ENCODE measurements at regions of chr20 and their contacts with region 1.

Region 1: GRCh38 chr20:38893565-38894090 is 32.6 kb upstream of the FAM83D start:
- DNase-seq: peak; percentile 82
- H3K4me3 Mint-ChIP-seq: no peak overlapping the region
- H3K27ac Mint-ChIP-seq: peak overlapping the region; percentile 73
- H3K4me1 Mint-ChIP-seq: peaks cover 32% of the 10 kb centered on the region
- H3K27me3 Mint-ChIP-seq: no peaks in the 10 kb centered on the region

Region 2: GRCh38 chr20:38751360-38751976 is 142.2 kb before region 1 on chr20:
- CTCF ChIA-PET with region 1: interaction called, 23 read pairs
- DNase-seq: peak; percentile 53
- H3K4me3 Mint-ChIP-seq: no peak overlapping the region
- H3K27ac Mint-ChIP-seq: no peak overlapping the region
- H3K4me1 Mint-ChIP-seq: peaks cover 31% of the 10 kb centered on the region
- H3K27me3 Mint-ChIP-seq: no peaks in the 10 kb centered on the region

Region 3: GRCh38 chr20:38779247-38780097 is 114.2 kb before region 1 on chr20:
- CTCF ChIA-PET with region 1: no interaction called
- DNase-seq: no peak
- H3K4me3 Mint-ChIP-seq: no peak overlapping the region
- H3K27ac Mint-ChIP-seq: no peak overlapping the region
- H3K4me1 Mint-ChIP-seq: peaks cover 9% of the 10 kb centered on the region
- H3K27me3 Mint-ChIP-seq: no peaks in the 10 kb centered on the region

Region 4: DNA sequence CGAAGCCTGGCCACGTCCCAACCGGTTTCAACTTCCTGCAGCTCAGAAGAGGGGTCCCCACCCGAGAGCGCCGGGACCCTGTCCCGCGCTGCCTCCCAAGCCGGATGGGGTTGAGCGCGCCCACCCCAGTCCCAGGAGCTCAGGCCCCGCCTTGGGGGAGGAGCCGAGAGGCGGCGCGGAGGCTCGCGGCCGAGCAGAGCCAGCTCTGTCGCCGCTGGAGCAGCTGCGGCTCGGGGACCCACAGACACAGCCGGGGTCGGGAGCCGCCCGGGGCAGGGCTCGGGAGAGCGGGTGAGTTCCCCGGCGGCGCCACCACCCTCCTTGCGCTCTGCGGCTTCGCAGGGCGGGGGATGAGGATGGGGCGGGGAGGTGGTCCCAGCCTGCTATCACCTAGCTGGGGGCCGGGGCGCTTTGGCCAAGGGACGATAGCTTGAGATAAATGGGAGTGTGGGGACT is 88.1 kb before region 1 on chr20 and contains the start of gene PPP1R16B:
- CTCF ChIA-PET with region 1: interaction called, 33 read pairs
- DNase-seq: peak; percentile 89
- H3K4me3 Mint-ChIP-seq: peak within 1 kb of the TSS; percentile 87
- H3K27ac Mint-ChIP-seq: peak within 1 kb of the TSS; percentile 99
- H3K4me1 Mint-ChIP-seq: peaks cover 69% of the 10 kb centered on the region
- H3K27me3 Mint-ChIP-seq: peaks cover 4% of the 10 kb centered on the region

Region 5: DNA sequence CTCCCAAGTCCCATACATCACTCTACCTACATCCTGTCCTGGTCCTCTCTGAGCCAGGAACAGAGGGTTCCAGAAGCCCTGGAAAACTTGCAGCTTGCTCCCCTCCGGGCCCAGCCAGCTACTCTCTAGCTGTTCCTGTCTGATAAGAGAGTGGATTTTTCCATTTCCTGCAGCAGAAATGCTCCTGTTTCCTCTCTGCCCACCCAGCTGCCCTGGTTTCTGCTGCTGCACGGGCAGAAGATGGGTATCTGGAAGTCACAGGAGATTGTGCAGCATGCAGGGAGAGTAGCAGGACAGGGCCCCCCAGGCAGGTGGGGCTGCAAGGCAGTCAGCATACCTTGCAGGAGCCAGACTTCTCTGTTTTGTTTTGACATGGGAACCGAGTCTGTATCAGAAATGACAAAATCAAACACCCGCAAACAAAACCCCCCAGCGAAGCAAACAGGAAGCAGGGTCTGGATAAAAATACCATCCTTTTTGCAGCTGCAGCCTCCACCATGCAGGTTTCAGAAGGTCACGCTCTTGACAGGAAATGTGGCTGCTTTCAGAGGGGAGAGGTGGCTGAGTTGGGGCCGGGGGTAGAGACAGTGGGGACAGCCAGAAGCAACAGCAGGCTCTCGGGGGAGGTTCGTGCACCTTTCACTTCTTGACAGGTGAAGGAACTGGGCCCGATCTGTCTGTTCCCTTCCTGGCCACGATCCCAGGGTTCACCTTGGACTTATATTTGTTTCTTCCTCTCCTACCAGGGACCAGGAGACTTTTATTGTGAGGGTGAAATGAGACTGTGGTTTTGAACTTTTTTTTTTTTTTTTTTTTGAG is 18.2 kb before region 1 on chr20:
- CTCF ChIA-PET with region 1: interaction called, 27 read pairs
- DNase-seq: peak; percentile 65
- H3K4me3 Mint-ChIP-seq: peak overlapping the region; percentile 60
- H3K27ac Mint-ChIP-seq: peak overlapping the region; percentile 93
- H3K4me1 Mint-ChIP-seq: peaks cover 88% of the 10 kb centered on the region
- H3K27me3 Mint-ChIP-seq: no peaks in the 10 kb centered on the region

Region 6: DNA sequence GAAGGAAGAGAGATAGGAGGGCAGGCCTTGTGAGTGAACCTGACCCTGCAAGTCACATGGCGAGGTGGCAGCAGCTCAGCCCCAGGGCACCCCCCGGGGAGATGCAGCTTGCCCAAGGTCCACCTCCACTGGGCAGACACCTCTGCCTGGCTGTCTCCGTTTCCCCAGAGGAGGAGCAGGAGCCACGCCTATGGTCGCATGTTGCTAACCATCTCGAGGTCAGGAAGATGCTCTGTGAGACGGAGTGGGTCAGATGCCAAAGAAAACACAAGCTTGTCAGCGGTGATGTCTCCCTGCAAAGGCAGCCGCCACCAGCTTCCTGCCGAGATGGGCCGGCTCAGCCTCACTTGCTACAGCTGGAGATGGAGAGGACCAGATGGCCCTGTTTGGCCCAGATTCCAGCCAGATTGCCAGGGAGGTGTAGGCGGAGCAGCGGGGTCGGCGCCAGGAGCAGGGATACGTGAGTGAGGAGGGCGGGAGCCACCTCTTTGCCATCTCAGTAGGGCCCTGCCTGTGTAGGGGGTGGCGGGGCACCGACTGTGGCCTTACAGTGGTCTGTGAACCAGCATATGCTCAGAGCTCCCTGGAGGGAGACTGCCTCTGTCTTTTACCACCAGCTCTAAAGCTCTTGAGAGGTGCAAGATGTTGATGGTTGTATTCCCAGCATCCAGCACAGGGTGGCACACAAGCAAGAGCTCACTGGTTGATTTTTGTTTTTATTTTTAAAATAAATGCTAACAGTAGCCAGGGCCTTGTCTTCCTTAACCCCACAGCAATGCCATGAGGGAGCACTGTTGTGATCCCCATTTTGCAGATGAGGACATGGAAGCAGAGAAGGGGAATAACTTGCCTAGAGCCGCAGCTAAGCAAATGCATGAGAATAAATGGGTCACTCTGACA is 10.3 kb before region 1 on chr20:
- CTCF ChIA-PET with region 1: interaction called, 27 read pairs
- DNase-seq: no peak
- H3K4me3 Mint-ChIP-seq: no peak overlapping the region
- H3K27ac Mint-ChIP-seq: peak overlapping the region; percentile 72
- H3K4me1 Mint-ChIP-seq: peaks cover 42% of the 10 kb centered on the region
- H3K27me3 Mint-ChIP-seq: no peaks in the 10 kb centered on the region